Tibial artery (tissue), 4 donors: ENCODE measurements at regions of chr13 and their contacts with region 1.

Region 1: DNA sequence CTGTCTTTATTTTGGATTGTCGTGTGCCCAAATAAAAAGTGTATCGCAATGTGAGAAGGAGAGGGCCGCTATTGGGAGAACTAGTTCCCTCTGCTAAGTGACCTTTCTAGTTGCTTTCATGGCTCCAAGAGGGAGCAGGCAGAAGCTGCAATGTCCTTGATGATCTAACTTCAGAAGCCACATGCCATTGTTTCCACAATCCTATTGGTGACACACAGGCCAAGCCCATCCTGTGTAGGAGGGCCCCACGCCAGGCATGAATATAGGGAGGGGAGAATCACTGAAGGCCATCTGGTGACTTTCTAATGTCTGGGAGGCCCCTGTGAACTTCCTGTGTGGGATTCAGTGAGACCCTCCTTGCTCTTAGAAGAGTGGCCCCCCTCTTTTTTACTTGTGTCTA is 47.8 kb upstream of the KPNA3 start:
- DNase-seq: no peak
- H3K4me3 ChIP-seq: no peak overlapping the region
- H3K27ac ChIP-seq: no peak overlapping the region
- H3K4me1 ChIP-seq: no peaks in the 10 kb centered on the region
- H3K27me3 ChIP-seq: no peaks in the 10 kb centered on the region
- CTCF ChIP-seq: no peak

Region 2: GRCh38 chr13:49652355-49653305 is 187.6 kb before region 1 on chr13:
- intact Hi-C with region 1: loop called (anchors 5 kb)
- DNase-seq: no peak
- H3K4me3 ChIP-seq: no peak overlapping the region
- H3K27ac ChIP-seq: no peak overlapping the region
- H3K4me1 ChIP-seq: peaks cover 0 to 8% (median 7%) of the 10 kb centered on the region in 4 donors
- H3K27me3 ChIP-seq: no peaks in the 10 kb centered on the region
- CTCF ChIP-seq: peak; percentile 35 to 51

Region 3: DNA sequence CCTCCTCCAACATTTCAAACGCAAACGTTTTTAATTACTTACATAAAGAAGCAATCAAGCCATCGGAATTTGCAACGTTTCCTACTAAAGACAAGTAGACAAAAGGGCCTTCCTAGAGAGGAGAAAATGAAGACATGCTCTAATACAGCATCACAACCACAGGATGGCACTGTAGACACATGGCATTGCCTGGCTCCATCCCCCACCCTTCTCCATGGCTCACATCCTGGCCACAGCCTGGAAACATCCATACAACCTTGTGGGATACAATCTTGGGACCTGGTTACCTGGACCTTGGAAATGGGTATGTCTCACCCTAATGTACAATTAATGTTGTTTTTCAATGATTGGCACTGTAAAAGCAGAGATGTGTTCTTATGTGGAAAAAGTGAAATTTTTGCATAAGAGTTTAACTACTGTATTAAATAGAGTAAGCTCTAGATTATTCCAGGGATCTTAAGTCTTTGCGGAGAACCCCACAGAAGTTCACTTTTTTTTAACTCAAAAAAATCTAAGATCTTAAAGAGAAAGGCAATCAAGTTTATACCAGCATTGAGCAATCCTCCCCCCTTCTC is 170.4 kb before region 1 on chr13:
- intact Hi-C with region 1: loop called (anchors 5 kb)
- DNase-seq: no peak
- H3K4me3 ChIP-seq: no peak overlapping the region
- H3K27ac ChIP-seq: no peak overlapping the region
- H3K4me1 ChIP-seq: no peaks in the 10 kb centered on the region
- H3K27me3 ChIP-seq: no peaks in the 10 kb centered on the region
- CTCF ChIP-seq: peak; percentile 34 to 48